GM12878 (cell line): ENCODE measurements at regions of chr5 and their contacts with region 1.

Region 1: GRCh38 chr5:158074992-158075769 is 216.2 kb upstream of the CLINT1 start:
- DNase-seq: no peak
- ATAC-seq: peak; percentile 94
- H3K4me3 ChIP-seq: no peak overlapping the region
- H3K27ac ChIP-seq: no peak overlapping the region
- H3K4me1 ChIP-seq: no peaks in the 10 kb centered on the region
- H3K27me3 ChIP-seq: no peaks in the 10 kb centered on the region; a peak in 1 of 4 replicates
- CTCF ChIP-seq: peak; percentile 78 to 81 (median 80)
- EP300 ChIP-seq: no peak
- POLR2A ChIP-seq: no peak
- RAD21 ChIP-seq: peak; percentile 71

Region 2: GRCh38 chr5:158058208-158059120 is 16.7 kb before region 1 on chr5:
- CTCF ChIA-PET with region 1: interaction called, 51 read pairs
- POLR2A ChIA-PET with region 1: no interaction called
- RAD21 ChIA-PET with region 1: interaction called, 3 read pairs
- SMC1A ChIA-PET with region 1: interaction called, 7 read pairs
- in situ Hi-C with region 1: no loop called
- intact Hi-C with region 1: no loop called
- DNase-seq: no peak
- ATAC-seq: no peak
- H3K4me3 ChIP-seq: no peak overlapping the region
- H3K27ac ChIP-seq: no peak overlapping the region
- H3K4me1 ChIP-seq: no peaks in the 10 kb centered on the region
- H3K27me3 ChIP-seq: no peaks in the 10 kb centered on the region; a peak in 2 of 4 replicates
- CTCF ChIP-seq: no peak
- EP300 ChIP-seq: no peak
- POLR2A ChIP-seq: no peak
- RAD21 ChIP-seq: no peak

Region 3: GRCh38 chr5:158064334-158065123 is 10.7 kb before region 1 on chr5:
- CTCF ChIA-PET with region 1: interaction called, 51 read pairs
- POLR2A ChIA-PET with region 1: no interaction called
- RAD21 ChIA-PET with region 1: interaction called, 6 read pairs
- SMC1A ChIA-PET with region 1: interaction called, 7 read pairs
- in situ Hi-C with region 1: no loop called
- intact Hi-C with region 1: no loop called
- DNase-seq: no peak
- ATAC-seq: no peak
- H3K4me3 ChIP-seq: no peak overlapping the region
- H3K27ac ChIP-seq: no peak overlapping the region
- H3K4me1 ChIP-seq: no peaks in the 10 kb centered on the region
- H3K27me3 ChIP-seq: no peaks in the 10 kb centered on the region; a peak in 2 of 4 replicates
- CTCF ChIP-seq: no peak
- EP300 ChIP-seq: no peak
- POLR2A ChIP-seq: no peak
- RAD21 ChIP-seq: no peak

Region 4: GRCh38 chr5:158096835-158097234 is 21.7 kb after region 1 on chr5:
- CTCF ChIA-PET with region 1: interaction called, 18 read pairs
- POLR2A ChIA-PET with region 1: no interaction called
- RAD21 ChIA-PET with region 1: interaction called, 3 read pairs
- SMC1A ChIA-PET with region 1: interaction called, 4 read pairs
- in situ Hi-C with region 1: no loop called
- intact Hi-C with region 1: no loop called
- DNase-seq: no peak
- ATAC-seq: no peak
- H3K4me3 ChIP-seq: no peak overlapping the region
- H3K27ac ChIP-seq: no peak overlapping the region
- H3K4me1 ChIP-seq: no peaks in the 10 kb centered on the region
- H3K27me3 ChIP-seq: peaks cover 0 to 3% of the 10 kb centered on the region in 2 experiments; a peak in 2 of 4 replicates
- CTCF ChIP-seq: no peak
- EP300 ChIP-seq: no peak
- POLR2A ChIP-seq: no peak
- RAD21 ChIP-seq: no peak

Region 5: GRCh38 chr5:158174918-158175851 is 100.0 kb after region 1 on chr5:
- CTCF ChIA-PET with region 1: interaction called, 11 read pairs
- POLR2A ChIA-PET with region 1: interaction called, 3 read pairs
- RAD21 ChIA-PET with region 1: interaction called, 10 read pairs
- SMC1A ChIA-PET with region 1: interaction called, 17 read pairs
- in situ Hi-C with region 1: no loop called
- intact Hi-C with region 1: no loop called
- DNase-seq: peak; percentile 27
- ATAC-seq: peak; percentile 97
- H3K4me3 ChIP-seq: no peak overlapping the region
- H3K27ac ChIP-seq: no peak overlapping the region
- H3K4me1 ChIP-seq: no peaks in the 10 kb centered on the region
- H3K27me3 ChIP-seq: peaks cover 0 to 1% of the 10 kb centered on the region in 2 experiments; a peak in 1 of 4 replicates
- CTCF ChIP-seq: peak; percentile 81 to 87 (median 84)
- EP300 ChIP-seq: no peak
- POLR2A ChIP-seq: no peak
- RAD21 ChIP-seq: peak; percentile 99

Region 6: DNA sequence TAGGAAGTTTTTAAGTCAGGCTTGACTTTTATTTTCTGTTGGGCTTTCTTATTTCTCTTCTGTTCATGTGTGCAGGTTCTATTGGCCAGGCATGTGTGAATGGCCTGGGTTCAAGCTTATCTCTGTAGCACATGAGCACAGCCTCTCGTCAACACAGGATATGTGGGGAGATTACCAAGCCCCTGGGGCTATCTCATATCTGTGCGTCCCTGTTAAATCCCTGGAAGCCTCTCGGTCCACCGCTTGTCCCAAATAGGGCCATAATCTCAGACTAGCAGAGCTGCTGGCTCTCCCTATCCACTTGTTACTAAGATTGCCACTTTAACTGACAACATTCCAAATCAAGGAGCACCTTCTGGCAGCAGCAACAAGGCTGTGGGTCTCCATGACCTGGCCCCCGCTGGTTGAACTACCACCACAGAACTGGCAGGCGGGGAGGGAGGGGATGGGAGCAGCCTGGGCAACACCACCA is 1052.9 kb after region 1 on chr5:
- CTCF ChIA-PET with region 1: interaction called, 28 read pairs
- POLR2A ChIA-PET with region 1: no interaction called
- RAD21 ChIA-PET with region 1: interaction called, 25 read pairs
- SMC1A ChIA-PET with region 1: interaction called, 31 read pairs
- in situ Hi-C with region 1: loop called (anchors 10 kb)
- intact Hi-C with region 1: loop called (anchors 1 kb)
- DNase-seq: no peak
- ATAC-seq: no peak
- H3K4me3 ChIP-seq: no peak overlapping the region
- H3K27ac ChIP-seq: no peak overlapping the region
- H3K4me1 ChIP-seq: no peaks in the 10 kb centered on the region
- H3K27me3 ChIP-seq: 0 out of 4 replicates have a peak, but pooled peaks cover 0 to 4% of the 10 kb centered on the region in 2 experiments
- CTCF ChIP-seq: no peak
- EP300 ChIP-seq: no peak
- POLR2A ChIP-seq: no peak
- RAD21 ChIP-seq: no peak